Ascending aorta (tissue), 2 donors: ENCODE measurements at regions of chr3 and their contacts with region 1.

Region 1: GRCh38 chr3:88203642-88204055 is 53.9 kb downstream of the C3orf38 start:
- DNase-seq: peak in 1 of 2 donors; percentile 76
- H3K4me3 ChIP-seq: no peak overlapping the region
- H3K27ac ChIP-seq: no peak overlapping the region
- H3K4me1 ChIP-seq: no peaks in the 10 kb centered on the region
- H3K27me3 ChIP-seq: no peaks in the 10 kb centered on the region
- CTCF ChIP-seq: peak; percentile 52 to 72 (median 66)

Region 2: GRCh38 chr3:88180398-88180999 is 23.1 kb before region 1 on chr3:
- intact Hi-C with region 1: no loop called
- DNase-seq: no peak
- H3K4me3 ChIP-seq: no peak overlapping the region
- H3K27ac ChIP-seq: no peak overlapping the region
- H3K4me1 ChIP-seq: no peaks in the 10 kb centered on the region
- H3K27me3 ChIP-seq: no peaks in the 10 kb centered on the region
- CTCF ChIP-seq: peak in 1 of 3 experiments; percentile 18

Region 3: DNA sequence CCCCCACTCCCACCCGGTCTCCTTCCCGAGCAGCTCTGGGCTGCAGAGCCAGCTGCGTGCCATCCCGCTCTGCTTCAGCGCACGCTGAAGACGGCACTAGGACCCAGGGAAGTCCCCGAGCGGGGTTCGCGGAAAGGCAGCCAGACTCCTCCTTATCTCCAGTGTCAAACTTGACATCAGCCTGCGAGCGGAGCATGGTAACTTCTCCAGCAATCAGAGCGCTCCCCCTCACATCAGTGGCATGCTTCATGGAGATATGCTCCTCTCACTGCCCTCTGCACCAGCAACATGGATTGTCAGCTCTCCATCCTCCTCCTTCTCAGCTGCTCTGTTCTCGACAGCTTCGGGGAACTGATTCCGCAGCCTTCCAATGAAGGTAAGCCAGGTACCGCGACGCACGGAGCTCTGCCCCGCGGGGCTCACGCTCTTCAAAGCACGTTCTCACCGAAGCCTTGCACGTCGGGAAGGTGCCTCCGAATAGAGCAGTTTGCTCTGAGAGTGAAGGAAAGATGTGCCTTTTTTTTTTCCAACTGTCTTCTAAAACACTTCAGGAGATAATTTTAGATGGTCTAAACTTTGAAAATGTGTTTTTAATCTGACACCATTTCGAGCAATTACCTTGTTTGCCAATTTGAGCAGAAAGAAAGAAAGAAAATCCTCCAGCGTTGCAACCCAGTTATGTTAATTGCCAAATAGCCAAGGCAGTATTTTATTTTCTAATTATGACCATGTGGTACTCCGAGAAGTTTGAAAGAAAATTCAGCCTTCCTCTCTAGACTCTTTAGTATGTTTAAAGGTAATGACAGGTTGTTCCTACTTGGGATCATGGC is 904.0 kb after region 1 on chr3 and contains the start of gene EPHA3:
- intact Hi-C with region 1: loop called (anchors 10 kb)
- DNase-seq: peak in 1 of 2 donors; percentile 69
- H3K4me3 ChIP-seq: peak within 1 kb of the TSS; percentile 47 to 68
- H3K27ac ChIP-seq: no peak within 1 kb of the TSS
- H3K4me1 ChIP-seq: no peaks in the 10 kb centered on the region
- H3K27me3 ChIP-seq: no peaks in the 10 kb centered on the region
- CTCF ChIP-seq: no peak
- total RNA-seq, gene EPHA3: 3.3 TPM

Region 4: DNA sequence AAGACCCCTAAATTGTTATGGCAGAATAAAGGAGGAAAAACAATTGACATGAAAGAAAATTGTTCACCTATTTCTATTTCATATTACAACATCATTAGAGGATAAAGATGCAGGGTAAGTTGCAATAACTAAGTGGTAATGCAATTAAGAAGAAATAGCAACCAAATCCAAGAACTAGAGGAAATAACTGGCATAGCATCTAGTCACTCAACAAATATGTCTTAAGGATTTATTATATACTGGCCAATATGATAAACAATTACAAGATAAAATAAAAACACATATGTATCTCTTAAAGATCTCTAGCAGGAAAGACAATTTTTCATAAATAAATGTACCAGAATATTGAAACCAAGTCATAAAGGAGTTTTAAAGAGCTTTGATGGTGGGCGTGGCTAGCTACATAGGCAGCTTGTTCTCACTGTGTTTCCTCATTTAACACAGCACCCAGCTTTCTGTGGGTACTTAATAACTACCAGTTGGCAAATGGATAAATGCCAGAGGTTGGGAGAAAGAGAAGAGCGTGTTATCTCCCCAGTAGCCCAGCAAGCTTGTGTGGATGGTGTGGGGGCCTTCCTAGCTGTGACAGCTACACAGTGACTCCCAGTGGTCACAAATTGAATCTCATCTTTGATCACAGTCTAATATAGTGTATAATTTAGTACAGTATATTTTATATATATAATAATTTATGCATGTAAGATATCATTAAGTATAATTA is 1887.7 kb after region 1 on chr3:
- intact Hi-C with region 1: loop called (anchors 10 kb)
- DNase-seq: no peak
- H3K4me3 ChIP-seq: peak overlapping the region in 1 of 2 donors; percentile 13
- H3K27ac ChIP-seq: no peak overlapping the region
- H3K4me1 ChIP-seq: no peaks in the 10 kb centered on the region
- H3K27me3 ChIP-seq: no peaks in the 10 kb centered on the region
- CTCF ChIP-seq: peak in 2 of 3 experiments; percentile 43 to 61